ENCODE measurements at regions of chr11 and their contacts with region 1.

Region 1: DNA sequence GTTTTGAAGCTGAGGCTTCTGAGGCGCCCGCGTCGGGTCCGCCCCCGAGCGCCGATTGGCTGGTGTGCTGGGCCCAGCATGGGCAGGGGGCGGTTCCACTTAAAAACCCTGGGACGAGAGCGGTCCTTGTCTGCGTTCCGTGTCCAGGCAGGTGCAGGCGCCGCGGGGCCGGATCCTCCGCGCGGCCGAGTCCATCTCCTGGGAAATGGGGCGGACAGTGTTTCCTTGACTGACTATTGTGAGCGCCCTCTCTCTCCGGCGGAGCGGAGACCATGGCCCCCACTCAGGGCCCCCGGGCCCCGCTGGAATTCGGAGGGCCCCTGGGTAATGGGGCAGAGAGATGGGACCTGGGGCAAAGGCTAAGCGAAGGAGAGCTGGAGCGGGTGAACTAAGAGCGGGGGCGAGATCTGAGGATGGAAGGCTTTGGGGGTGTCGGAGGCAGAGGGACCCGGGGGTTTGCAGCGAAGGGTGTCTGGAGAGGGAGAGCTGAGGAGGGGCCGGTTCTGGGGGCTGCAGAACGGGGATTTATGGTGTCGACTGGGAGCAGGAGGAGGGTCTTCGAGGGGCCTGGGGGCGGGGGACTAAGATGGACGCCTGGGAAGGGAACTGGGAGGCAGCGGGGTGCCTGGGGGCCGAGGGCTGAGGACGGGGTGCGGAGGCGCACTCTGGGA is at the start of gene TM7SF2:
- DNase-seq: peak; percentile 97
- ATAC-seq: peak; percentile 77
- H3K4me3 Mint-ChIP-seq: peak within 1 kb of the TSS; percentile 91
- H3K27ac Mint-ChIP-seq: peak within 1 kb of the TSS; percentile 89
- H3K4me1 Mint-ChIP-seq: peaks cover 17% of the 10 kb centered on the region
- H3K27me3 Mint-ChIP-seq: no peaks in the 10 kb centered on the region
- CTCF ChIP-seq: no peak
- total RNA-seq, gene TM7SF2: 63.8 to 74.9 TPM (median 71.5 TPM) in 3 replicates

Region 2: DNA sequence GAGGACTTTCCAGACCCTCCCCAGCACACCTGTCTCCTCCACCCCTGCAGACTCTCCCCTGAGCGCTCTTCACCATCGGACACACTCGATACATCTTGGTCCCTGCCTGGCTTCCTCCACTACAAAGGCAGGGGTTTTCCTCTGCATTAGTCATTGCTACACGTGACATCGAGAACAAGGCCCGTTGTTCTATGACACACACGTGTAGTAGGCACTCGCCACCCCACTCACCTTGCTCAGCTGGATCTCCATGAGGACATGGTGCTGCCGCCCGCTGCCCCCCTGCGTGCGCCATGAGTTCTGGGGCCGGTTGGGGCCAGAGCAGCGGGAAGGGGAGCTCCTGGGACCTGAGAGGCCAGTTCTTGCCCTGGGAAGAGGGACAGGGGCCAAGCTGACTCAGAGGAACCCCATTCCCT is 211.6 kb before region 1 on chr11:
- CTCF ChIA-PET with region 1: no interaction called
- POLR2A ChIA-PET with region 1: no interaction called
- DNase-seq: no peak
- ATAC-seq: no peak
- H3K4me3 Mint-ChIP-seq: no peak overlapping the region
- H3K27ac Mint-ChIP-seq: peak overlapping the region; percentile 50; the same call in 1 of the 2 replicates
- H3K4me1 Mint-ChIP-seq: no peaks in the 10 kb centered on the region
- H3K27me3 Mint-ChIP-seq: no peaks in the 10 kb centered on the region
- CTCF ChIP-seq: no peak

Region 3: GRCh38 chr11:65040847-65041621 is 70.8 kb before region 1 on chr11 and contains the start of gene SAC3D1:
- CTCF ChIA-PET with region 1: interaction called, 11 read pairs
- POLR2A ChIA-PET with region 1: no interaction called
- DNase-seq: peak; percentile 92
- ATAC-seq: peak; percentile 90
- H3K4me3 Mint-ChIP-seq: peak within 1 kb of the TSS; percentile 90
- H3K27ac Mint-ChIP-seq: peak within 1 kb of the TSS; percentile 96
- H3K4me1 Mint-ChIP-seq: peaks cover 9% of the 10 kb centered on the region
- H3K27me3 Mint-ChIP-seq: no peaks in the 10 kb centered on the region
- CTCF ChIP-seq: no peak
- total RNA-seq, gene SAC3D1: 22.2 to 26.2 TPM (median 22.8 TPM) in 3 replicates

Region 4: DNA sequence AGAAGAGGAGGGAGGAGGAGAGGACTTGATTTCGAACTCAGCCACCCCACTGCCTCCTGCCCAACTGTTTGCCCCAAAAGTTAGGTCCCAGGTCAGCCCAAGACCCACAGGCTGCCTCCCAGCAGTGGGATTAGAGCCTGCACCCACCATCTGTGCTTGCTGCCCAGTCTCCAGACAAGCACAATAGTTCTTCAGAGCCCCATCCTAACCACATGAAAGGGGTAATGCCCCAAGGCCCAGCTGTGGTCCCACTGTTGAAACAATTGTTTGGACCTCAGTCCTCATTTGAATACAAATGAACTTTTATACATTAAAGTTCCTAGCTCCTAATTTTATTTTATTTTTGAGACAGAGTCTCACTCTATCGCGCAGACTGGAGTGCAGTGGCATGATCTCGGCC is 21.3 kb before region 1 on chr11:
- CTCF ChIA-PET with region 1: interaction called, 104 read pairs
- POLR2A ChIA-PET with region 1: interaction called, 5 read pairs
- DNase-seq: no peak
- ATAC-seq: no peak
- H3K4me3 Mint-ChIP-seq: no peak overlapping the region
- H3K27ac Mint-ChIP-seq: no peak overlapping the region
- H3K4me1 Mint-ChIP-seq: peaks cover under 1% of the 10 kb centered on the region
- H3K27me3 Mint-ChIP-seq: no peaks in the 10 kb centered on the region
- CTCF ChIP-seq: no peak

Region 5: DNA sequence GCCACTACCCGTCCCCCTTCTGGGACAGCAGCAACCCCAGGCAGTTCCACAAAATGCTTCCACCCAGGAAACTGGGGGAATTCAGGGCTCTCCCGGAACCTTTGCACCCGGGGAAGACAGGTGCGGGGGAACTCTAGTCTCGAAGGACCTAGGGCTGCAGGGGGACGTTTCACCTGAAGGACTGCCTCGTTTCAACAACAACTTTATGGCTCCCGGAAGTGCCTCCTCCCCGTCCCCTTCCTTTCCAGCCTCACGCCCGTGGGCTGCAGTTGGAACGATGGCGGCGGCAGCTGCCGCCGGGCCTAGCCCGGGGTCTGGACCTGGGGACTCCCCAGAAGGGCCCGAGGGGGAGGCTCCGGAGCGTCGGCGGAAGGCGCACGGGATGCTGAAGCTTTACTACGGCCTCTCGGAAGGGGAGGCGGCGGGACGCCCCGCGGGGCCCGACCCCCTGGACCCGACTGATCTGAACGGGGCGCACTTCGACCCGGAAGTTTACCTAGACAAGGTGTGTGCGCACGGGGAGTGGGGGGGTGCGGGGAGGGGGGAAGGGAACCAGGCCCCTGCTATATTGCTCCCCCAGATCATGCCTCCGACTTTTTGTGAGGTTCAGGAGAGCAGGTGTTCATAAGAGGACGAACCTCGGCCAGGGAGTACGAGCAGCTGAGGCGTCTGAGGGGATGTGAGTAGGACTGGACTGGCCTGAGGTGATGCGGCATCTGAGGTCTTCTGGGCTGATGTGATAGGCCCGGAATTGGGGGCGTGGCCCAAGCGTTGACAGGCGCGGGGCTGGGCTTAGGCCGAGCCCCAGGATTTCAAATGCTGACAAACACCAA is 15.7 kb before region 1 on chr11 and contains the start of gene VPS51:
- CTCF ChIA-PET with region 1: interaction called, 104 read pairs
- POLR2A ChIA-PET with region 1: interaction called, 9 read pairs
- DNase-seq: peak; percentile 91
- ATAC-seq: peak; percentile 98
- H3K4me3 Mint-ChIP-seq: peak within 1 kb of the TSS; percentile 90
- H3K27ac Mint-ChIP-seq: peak within 1 kb of the TSS; percentile 99
- H3K4me1 Mint-ChIP-seq: peaks cover 6% of the 10 kb centered on the region
- H3K27me3 Mint-ChIP-seq: no peaks in the 10 kb centered on the region
- CTCF ChIP-seq: no peak
- total RNA-seq, gene VPS51: 122 to 136 TPM (median 123 TPM) in 3 replicates

Region 6: DNA sequence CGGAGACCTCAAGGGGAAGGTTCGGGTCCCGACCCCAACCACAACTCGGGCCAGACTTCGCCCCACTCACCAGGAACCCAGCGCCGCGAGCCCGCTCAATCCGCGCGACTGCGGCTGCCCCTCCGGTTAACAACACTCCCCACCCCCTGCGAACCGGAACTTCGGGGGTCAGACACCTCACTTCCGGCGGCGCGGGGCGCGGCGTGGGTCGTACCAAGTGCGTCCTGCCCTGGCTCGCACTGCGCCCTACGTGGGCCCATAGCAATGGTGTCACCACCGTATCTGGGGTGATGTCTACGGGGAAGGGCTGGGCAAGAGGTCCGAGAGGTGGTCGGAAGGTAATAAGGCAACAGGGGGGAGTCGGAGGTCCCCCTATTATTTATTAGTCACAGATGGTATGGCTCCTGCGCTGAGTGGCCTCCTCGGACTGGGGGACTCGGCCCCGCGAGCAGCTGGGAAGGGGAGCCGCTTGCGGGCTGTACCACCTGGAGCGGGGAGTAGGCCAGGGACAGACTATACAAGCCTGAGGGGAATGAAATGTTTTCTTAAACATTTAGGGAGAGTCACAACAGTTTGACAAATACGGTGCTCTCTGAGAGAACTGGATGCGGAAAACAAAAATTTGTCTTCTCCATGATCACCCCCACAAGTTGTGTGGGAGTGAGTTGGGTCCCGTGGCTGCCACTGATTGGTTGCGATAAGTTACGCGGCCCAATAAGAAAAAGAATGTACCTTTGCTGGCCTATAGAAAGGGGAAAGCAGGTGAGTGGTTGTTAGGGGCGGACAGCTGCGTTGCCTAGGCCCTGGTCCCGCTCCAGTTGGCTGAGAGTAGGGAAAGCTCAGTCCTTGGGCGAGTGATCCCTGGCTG is 22.7 kb after region 1 on chr11 and contains the start of gene SYVN1:
- CTCF ChIA-PET with region 1: interaction called, 40 read pairs
- POLR2A ChIA-PET with region 1: interaction called, 13 read pairs
- DNase-seq: peak; percentile 90
- ATAC-seq: peak; percentile 92
- H3K4me3 Mint-ChIP-seq: peak within 1 kb of the TSS; percentile 98
- H3K27ac Mint-ChIP-seq: peak within 1 kb of the TSS; percentile 100
- H3K4me1 Mint-ChIP-seq: peaks cover 18% of the 10 kb centered on the region
- H3K27me3 Mint-ChIP-seq: no peaks in the 10 kb centered on the region; the same call in 1 of the 2 replicates
- CTCF ChIP-seq: no peak
- total RNA-seq, gene SYVN1: 27.6 to 34.8 TPM (median 31.8 TPM) in 3 replicates

Region 7: GRCh38 chr11:65163684-65164083 is 51.8 kb after region 1 on chr11:
- CTCF ChIA-PET with region 1: no interaction called
- POLR2A ChIA-PET with region 1: no interaction called
- DNase-seq: no peak
- ATAC-seq: no peak
- H3K4me3 Mint-ChIP-seq: no peak overlapping the region
- H3K27ac Mint-ChIP-seq: no peak overlapping the region
- H3K4me1 Mint-ChIP-seq: peaks cover 9% of the 10 kb centered on the region
- H3K27me3 Mint-ChIP-seq: peaks cover 4% of the 10 kb centered on the region; the same call in 1 of the 2 replicates
- CTCF ChIP-seq: no peak

Measured in WTC11 (cell line).